Thyroid gland (tissue), 4 donors: ENCODE measurements at regions of chr10 and their contacts with region 1.

Region 1: DNA sequence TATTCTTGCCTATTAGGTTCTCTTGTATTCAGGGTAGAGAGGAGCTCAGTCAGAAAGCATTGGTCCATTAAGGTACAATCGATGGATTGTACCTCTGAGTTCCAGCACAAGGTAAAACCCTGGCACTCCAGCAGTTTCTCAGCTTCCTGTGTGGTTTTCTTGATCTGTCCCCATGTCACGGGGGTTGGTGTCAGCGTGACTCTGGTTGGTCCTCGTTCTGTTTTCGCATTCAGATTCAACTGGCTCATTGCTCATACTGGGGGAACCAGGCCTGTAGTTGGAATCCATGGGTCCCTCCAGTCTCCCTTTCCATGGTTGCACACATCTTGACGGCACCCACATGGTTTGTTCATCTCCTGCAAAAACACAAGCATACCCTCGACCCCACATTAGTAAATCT is 32.7 kb upstream of the RASGEF1A start:
- DNase-seq: no peak
- H3K4me3 ChIP-seq: no peak overlapping the region
- H3K27ac ChIP-seq: no peak overlapping the region
- H3K4me1 ChIP-seq: peaks cover 0 to 7% of the 10 kb centered on the region in 2 donors
- H3K27me3 ChIP-seq: no peaks in the 10 kb centered on the region
- CTCF ChIP-seq: no peak
- POLR2A ChIP-seq: no peak

Region 2: GRCh38 chr10:43340619-43341018 is 41.0 kb after region 1 on chr10:
- intact Hi-C with region 1: loop called (anchors 5 kb)
- DNase-seq: no peak
- H3K4me3 ChIP-seq: no peak overlapping the region
- H3K27ac ChIP-seq: no peak overlapping the region
- H3K4me1 ChIP-seq: peaks cover 0 to 22% of the 10 kb centered on the region in 2 donors
- H3K27me3 ChIP-seq: no peaks in the 10 kb centered on the region
- CTCF ChIP-seq: no peak
- POLR2A ChIP-seq: no peak

Region 3: DNA sequence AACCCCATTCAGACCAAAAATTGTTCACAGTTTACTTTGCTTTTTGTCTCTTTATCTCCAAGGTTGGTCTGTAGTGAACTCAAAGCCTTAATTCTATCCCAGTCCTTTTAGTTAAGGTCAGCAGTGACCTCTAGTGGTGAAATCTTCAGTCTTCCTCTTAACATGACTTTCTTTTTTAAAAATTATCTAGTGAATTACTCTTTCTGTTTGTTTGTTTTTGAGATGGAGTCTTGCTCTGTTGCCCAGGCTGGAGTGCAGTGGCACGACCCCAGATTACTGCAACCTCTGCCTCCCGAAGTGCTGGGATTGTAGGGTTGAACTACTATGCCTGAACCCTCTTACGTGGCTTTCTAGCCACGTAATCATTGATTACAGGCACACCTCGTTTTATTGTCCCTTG is 162.4 kb after region 1 on chr10:
- intact Hi-C with region 1: loop called (anchors 2 kb)
- DNase-seq: no peak
- H3K4me3 ChIP-seq: no peak overlapping the region
- H3K27ac ChIP-seq: no peak overlapping the region
- H3K4me1 ChIP-seq: no peaks in the 10 kb centered on the region
- H3K27me3 ChIP-seq: no peaks in the 10 kb centered on the region
- CTCF ChIP-seq: peak in 5 of 6 experiments; percentile 57 to 83 (median 65)
- POLR2A ChIP-seq: no peak